Right ventricle myocardium superior (tissue), 1 donor: ENCODE measurements at regions of chr12 and their contacts with region 1.

Region 1: DNA sequence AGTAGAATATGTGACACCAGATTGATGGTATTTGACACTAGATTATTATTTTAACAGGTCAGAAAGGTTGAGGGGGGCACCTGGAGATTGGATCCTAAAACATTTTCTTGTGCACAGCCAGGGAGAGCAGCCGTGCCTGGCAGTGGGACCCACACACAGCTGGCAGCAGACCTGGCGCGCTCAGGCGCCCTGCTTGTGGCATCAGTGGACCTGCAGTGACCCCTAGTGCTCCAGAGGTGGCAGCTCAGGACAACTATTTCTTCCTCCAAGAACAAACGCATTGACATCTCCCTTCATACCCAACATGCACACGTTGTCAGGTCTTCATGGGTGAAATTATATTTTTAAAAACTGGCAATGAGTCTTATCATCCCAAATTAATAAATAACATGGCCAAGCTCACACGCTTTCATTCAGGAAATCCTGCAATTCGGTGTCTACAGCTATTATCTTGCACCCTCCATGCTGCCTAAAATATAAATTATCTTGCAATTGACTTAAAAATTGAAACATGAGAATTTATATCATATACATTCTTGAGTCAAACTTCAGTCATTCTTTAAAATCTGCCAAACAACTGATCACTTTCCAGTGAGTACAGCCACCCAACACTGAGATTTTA is 7.7 kb upstream of the TMEM132D start:
- DNase-seq: peak; percentile 54
- ATAC-seq: peak; percentile 75

Region 2: GRCh38 chr12:128644664-128645296 is 1266.8 kb before region 1 on chr12:
- intact Hi-C with region 1: loop called (anchors 10 kb)
- DNase-seq: no peak
- ATAC-seq: no peak